ENCODE measurements at regions of chr2 and their contacts with region 1.

Region 1: GRCh38 chr2:31962757-31963361 is 47.9 kb downstream of the MEMO1 start:
- DNase-seq: peak; percentile 24
- H3K4me3 Mint-ChIP-seq: no peak overlapping the region
- H3K27ac Mint-ChIP-seq: peak overlapping the region; percentile 31
- H3K4me1 Mint-ChIP-seq: peaks cover 42% of the 10 kb centered on the region
- H3K27me3 Mint-ChIP-seq: no peaks in the 10 kb centered on the region

Region 2: DNA sequence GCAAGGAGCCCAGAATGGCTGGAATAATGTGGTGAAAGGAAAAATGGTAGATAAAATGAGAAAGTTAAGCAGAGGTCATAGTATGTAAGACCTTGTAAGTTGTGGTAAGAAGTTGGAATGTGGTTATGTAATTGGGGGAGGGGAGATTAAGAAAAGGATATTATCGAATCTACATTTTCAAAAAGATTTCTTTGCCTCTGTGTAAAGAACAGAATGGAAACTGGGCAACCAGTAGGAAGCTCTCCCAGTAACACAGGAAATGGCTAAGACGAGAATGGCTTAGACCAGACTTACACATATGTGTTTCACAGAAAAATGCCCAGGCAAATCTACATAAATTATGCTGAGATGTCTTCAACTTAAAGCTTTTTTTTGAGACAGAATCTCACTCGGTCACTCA is 34.8 kb after region 1 on chr2:
- intact Hi-C with region 1: loop called (anchors 5 kb)
- DNase-seq: no peak
- H3K4me3 Mint-ChIP-seq: no peak overlapping the region
- H3K27ac Mint-ChIP-seq: peak overlapping the region; percentile 18
- H3K4me1 Mint-ChIP-seq: peaks cover 38% of the 10 kb centered on the region
- H3K27me3 Mint-ChIP-seq: no peaks in the 10 kb centered on the region

Region 3: DNA sequence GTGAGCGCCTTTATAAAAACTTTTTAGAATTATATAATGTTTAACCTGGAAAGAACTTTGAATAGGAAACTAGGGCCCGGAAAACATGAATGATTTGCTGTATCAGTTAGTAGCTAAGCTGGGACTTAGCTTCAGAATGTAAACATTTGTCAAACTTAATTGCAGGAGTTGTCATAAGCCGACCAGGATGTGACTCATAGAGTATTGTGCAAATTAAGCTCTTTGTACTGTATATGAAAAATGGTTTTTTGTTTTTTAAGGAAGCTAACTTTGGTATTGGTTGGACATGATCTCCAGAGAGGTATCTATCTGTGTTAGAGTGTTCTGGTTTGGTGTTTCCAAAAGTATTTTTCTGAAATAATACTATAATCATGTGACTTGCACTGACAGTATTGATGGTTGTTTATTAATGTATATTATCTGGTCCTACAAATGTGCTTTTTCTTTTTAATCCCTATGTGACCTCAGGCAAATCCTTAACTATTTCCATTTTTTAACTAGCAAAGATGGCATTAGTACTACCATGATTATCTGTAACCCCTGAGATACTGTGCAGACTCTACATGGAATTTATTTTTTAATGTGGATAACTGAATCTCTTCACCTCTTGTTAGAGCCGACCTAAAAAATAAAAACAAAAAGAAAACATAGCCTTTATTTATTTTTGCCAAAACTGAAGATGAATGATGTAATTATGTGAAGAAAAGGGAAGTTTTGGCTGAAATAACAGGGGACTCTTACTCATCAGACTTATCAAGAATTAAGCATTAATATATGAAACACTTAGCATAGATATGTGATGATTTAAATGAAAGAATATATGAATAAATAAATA is 326.5 kb after region 1 on chr2:
- intact Hi-C with region 1: no loop called
- DNase-seq: no peak
- H3K4me3 Mint-ChIP-seq: no peak overlapping the region
- H3K27ac Mint-ChIP-seq: no peak overlapping the region
- H3K4me1 Mint-ChIP-seq: peaks cover 17% of the 10 kb centered on the region
- H3K27me3 Mint-ChIP-seq: no peaks in the 10 kb centered on the region